ENCODE measurements at regions of chr5 and their contacts with region 1.

Region 1: GRCh38 chr5:96729156-96729555 is 67.0 kb downstream of the CAST start:
- DNase-seq: no peak
- H3K4me3 ChIP-seq: no peak overlapping the region
- CTCF ChIP-seq: peak; percentile 18

Region 2: GRCh38 chr5:96344678-96345577 is 384.2 kb before region 1 on chr5:
- CTCF ChIA-PET with region 1: interaction called, 14 read pairs
- POLR2A ChIA-PET with region 1: no interaction called
- DNase-seq: peak; percentile 51
- H3K4me3 ChIP-seq: no peak overlapping the region
- CTCF ChIP-seq: peak; percentile 51

Region 3: DNA sequence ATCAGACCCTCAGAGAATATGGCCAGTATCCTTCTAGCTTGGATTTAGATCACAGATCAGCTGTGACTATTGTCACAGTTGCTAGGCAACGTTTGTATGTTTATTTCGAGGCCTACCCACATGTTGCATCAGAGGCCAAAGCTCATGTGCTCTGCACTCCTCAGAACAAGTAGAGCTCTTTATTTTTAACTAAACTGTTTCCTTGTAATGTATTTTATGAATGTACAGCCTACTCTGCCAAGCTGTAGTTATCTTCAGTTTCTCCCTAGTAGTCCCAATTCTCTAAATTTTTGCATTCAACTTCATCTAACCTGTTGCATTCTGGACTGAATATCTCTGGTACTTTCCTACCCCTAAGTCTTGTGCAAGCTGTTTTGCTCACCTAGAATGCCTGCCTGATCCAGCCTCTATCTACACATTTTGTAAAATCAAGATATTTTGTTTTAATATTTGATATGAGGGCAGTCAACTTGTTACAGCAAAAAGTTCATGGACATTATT is 14.2 kb before region 1 on chr5:
- CTCF ChIA-PET with region 1: interaction called, 20 read pairs
- POLR2A ChIA-PET with region 1: no interaction called
- DNase-seq: no peak
- H3K4me3 ChIP-seq: no peak overlapping the region
- CTCF ChIP-seq: no peak

Region 4: DNA sequence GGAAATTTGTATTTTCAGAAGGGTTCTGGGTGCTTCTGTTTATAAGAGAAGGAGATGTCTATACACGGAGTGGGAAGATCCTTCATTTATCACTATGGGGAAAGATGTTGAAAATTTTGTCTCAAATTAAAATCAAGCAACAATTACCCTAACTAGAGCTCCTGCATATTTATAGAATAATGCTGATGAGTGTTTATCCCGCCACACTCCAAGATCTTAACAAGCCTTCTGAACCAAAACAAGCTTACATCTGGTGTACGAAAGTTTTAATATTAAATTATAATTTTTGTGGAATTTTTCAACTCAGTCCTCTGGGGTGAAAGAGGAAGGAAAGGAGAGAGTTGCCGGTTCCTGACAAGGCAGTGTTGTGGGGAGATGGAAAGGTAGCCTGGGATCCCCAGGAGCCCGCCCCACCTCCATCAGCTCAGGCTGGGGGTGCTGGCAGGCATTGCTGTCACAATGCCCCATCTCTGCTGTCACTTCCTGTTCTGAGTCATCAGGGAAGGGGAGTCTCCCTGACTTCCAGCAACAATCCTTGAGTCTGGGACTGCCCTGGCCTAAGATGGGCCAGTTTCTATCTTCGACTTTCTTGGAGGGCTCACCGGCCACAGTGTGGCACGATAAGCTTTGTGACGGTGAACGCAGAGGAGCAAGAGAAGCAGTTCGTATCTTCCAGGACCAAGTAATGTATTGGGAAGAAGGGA is 14.1 kb after region 1 on chr5:
- CTCF ChIA-PET with region 1: interaction called, 11 read pairs
- POLR2A ChIA-PET with region 1: no interaction called
- DNase-seq: no peak
- H3K4me3 ChIP-seq: no peak overlapping the region
- CTCF ChIP-seq: no peak

Region 5: GRCh38 chr5:96758621-96759020 is 29.5 kb after region 1 on chr5:
- CTCF ChIA-PET with region 1: no interaction called
- POLR2A ChIA-PET with region 1: no interaction called
- DNase-seq: no peak
- H3K4me3 ChIP-seq: no peak overlapping the region
- CTCF ChIP-seq: no peak

Region 6: DNA sequence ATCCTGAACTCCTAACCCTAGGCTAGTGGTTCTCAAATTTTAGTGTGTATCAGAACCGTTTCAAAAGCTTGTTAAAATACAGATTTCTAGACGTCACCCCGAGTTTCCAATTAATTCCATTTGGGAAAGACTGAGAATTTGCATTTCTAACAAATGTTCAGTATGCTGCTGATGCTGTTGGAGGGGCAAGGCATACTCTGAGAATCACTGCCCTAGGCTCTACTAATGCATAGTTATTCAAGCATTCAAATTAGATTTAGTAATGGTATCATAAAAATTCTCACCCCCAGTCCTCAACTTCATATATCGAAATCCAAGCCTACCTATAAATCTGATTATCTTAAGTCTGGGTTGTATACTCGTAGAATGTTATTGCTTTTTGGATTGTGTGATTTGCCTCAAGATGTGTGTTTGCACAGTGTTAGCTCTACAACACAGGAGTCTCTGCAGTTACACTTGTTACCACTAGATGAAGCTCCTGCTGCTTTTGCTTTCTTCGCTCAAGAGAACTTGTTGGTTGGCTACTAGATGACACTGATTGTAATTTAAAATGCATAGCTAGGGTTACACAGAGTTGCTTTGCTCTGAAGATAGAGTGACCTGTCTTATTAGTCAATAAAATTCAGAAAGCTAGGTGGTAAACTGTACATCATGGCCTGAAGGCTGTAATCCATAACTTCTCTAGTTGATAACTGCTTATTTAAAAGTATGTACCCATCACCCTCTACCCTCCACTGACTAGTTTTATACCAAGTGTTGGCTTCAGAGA is 139.6 kb after region 1 on chr5:
- CTCF ChIA-PET with region 1: no interaction called
- POLR2A ChIA-PET with region 1: no interaction called
- DNase-seq: peak; percentile 42
- H3K4me3 ChIP-seq: no peak overlapping the region
- CTCF ChIP-seq: peak; percentile 92